Caco-2 (cell line): ENCODE measurements at regions of chr15 and their contacts with region 1.

Region 1: DNA sequence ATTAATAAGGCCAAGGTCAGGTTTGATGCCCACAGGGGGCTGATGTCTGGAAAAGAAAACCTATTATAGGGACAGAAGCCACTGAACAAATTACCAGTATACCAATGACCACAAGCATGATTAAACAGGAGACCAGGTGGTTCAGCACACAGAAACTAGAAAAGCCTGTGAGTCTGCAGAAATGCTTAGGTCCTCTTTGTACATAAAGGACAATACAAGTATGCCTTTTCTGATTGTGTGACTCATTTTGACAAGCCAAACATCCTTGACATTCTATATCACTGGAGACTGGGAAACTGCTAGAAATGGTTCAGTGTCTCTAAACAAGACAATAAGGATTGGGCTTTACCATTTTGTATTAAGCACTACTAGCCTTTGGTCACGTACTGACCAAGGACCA is 113.2 kb upstream of the MYO5C start:
- DNase-seq: no peak
- H3K4me3 ChIP-seq: no peak overlapping the region
- H3K4me3 Mint-ChIP-seq: no peak overlapping the region
- H3K27ac Mint-ChIP-seq: no peak overlapping the region
- H3K4me1 ChIP-seq: no peaks in the 10 kb centered on the region
- H3K4me1 Mint-ChIP-seq: no peaks in the 10 kb centered on the region
- H3K27me3 ChIP-seq: no peaks in the 10 kb centered on the region
- H3K27me3 Mint-ChIP-seq: no peaks in the 10 kb centered on the region
- CTCF ChIP-seq: no peak

Region 2: GRCh38 chr15:52466134-52466701 is 57.4 kb after region 1 on chr15:
- CTCF ChIA-PET with region 1: no interaction called
- POLR2A ChIA-PET with region 1: no interaction called
- intact Hi-C with region 1: loop called (anchors 10 kb)
- DNase-seq: no peak
- H3K4me3 ChIP-seq: no peak overlapping the region
- H3K4me3 Mint-ChIP-seq: no peak overlapping the region
- H3K27ac Mint-ChIP-seq: no peak overlapping the region
- H3K4me1 ChIP-seq: no peaks in the 10 kb centered on the region
- H3K4me1 Mint-ChIP-seq: no peaks in the 10 kb centered on the region
- H3K27me3 ChIP-seq: no peaks in the 10 kb centered on the region
- H3K27me3 Mint-ChIP-seq: no peaks in the 10 kb centered on the region
- CTCF ChIP-seq: no peak